ENCODE measurements at regions of chr1 and their contacts with region 1.

Region 1: GRCh38 chr1:78004719-78005447 is at the start of gene DNAJB4:
- DNase-seq: peak; percentile 29 to 83 (median 80)
- H3K4me3 ChIP-seq: peak within 1 kb of the TSS; percentile 89
- H3K4me3 Mint-ChIP-seq: peak within 1 kb of the TSS; percentile 86 to 93 (median 90)
- H3K27ac ChIP-seq: peak within 1 kb of the TSS; percentile 92
- H3K27ac Mint-ChIP-seq: peak within 1 kb of the TSS; percentile 93 to 99 (median 98)
- H3K4me1 ChIP-seq: peaks cover 17% of the 10 kb centered on the region
- H3K4me1 Mint-ChIP-seq: peaks cover 25 to 65% (median 61%) of the 10 kb centered on the region in 3 donors
- H3K27me3 ChIP-seq: no peaks in the 10 kb centered on the region
- H3K27me3 Mint-ChIP-seq: peaks cover 0 to 3% of the 10 kb centered on the region in 2 donors
- total RNA-seq, gene DNAJB4: 8.1 to 10.6 TPM

Region 2: DNA sequence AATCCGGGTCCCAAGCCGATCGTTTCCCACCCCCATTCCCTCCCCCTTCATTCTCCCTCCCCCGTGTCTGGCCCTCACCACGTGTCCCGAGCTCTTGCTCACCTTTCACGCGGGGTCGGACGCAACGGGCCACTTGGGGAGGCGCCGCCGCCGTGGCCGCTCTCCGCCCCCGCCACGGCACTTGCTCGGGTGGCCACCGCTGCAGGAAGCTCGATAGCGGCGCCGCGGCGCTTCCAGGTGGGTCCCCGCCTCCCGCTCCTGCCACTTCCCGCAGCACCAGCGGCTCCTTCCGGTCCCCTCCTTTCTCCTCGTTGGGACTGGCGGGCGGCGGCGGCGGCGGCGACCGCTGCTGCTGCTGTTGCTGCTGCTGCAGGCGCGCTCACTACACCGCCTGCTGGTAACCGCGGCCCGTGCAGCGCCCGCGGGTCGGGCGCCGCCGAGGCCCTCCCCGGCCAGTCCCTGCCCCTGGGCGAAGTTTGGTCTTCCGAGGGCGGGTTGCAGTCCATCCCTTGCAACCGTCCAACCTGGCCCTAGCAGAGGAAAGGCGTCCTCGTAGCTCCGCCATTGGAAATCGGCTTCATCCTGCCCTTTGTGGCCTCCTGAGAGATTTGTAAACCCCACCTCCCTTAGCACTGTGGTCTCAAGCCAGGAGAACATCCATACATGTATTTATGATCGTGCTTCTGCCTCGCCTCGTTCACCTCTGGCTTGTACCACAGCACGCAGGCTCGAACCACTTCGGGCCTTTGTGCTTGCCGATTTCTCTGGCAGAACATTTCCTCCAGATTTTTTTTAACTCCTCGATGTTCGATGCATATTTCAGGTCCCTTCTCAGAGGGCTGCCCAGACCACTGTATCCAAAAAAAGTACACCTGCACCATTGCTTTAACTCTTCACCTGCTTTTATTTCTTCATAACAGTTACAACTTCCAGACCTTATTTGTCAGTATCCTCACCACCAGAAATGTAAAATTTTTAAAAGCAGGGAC is 321.4 kb before region 1 on chr1:
- CTCF ChIA-PET with region 1: no interaction called
- POLR2A ChIA-PET with region 1: interaction called, 12 read pairs
- DNase-seq: peak; percentile 90 to 95 (median 93)
- H3K4me3 ChIP-seq: peak overlapping the region; percentile 64
- H3K4me3 Mint-ChIP-seq: peak overlapping the region; percentile 89 to 98 (median 96)
- H3K27ac ChIP-seq: peak overlapping the region; percentile 84
- H3K27ac Mint-ChIP-seq: peak overlapping the region; percentile 93 to 98 (median 96)
- H3K4me1 ChIP-seq: peaks cover 31% of the 10 kb centered on the region
- H3K4me1 Mint-ChIP-seq: peaks cover 30 to 49% (median 40%) of the 10 kb centered on the region in 3 donors
- H3K27me3 ChIP-seq: no peaks in the 10 kb centered on the region
- H3K27me3 Mint-ChIP-seq: peaks cover 0 to 3% of the 10 kb centered on the region in 2 donors

Region 3: DNA sequence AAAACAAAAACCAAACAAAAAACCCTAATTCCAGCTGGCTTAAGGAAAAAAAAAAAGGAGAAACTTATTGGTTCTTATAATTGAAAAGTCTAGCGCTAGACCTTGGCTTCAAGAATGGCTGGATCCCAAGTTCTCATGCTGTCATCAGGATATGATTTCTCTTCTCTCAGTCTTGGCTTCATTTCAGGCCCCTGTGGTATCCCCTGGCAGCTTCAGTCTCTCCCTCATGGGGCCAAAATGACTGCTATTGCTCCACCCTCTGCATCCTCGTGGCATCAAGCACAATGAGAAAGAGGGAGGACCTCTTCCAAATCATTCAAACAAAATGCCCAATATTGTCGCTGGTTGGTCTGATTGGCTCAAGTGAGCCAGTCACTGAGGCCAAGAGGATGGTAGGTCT is 121.6 kb after region 1 on chr1:
- CTCF ChIA-PET with region 1: no interaction called
- POLR2A ChIA-PET with region 1: no interaction called
- DNase-seq: no peak
- H3K4me3 ChIP-seq: no peak overlapping the region
- H3K4me3 Mint-ChIP-seq: no peak overlapping the region
- H3K27ac ChIP-seq: no peak overlapping the region
- H3K27ac Mint-ChIP-seq: no peak overlapping the region
- H3K4me1 ChIP-seq: no peaks in the 10 kb centered on the region
- H3K4me1 Mint-ChIP-seq: no peaks in the 10 kb centered on the region
- H3K27me3 ChIP-seq: no peaks in the 10 kb centered on the region
- H3K27me3 Mint-ChIP-seq: no peaks in the 10 kb centered on the region

Measured in CD8-positive, alpha-beta memory T cell (primary cell).